Transverse colon (tissue), 4 donors: ENCODE measurements at regions of chr6 and their contacts with region 1.

Region 1: GRCh38 chr6:130076512-130076911 is 58.1 kb downstream of the L3MBTL3 start:
- DNase-seq: no peak
- H3K4me3 ChIP-seq: no peak overlapping the region
- H3K27ac ChIP-seq: no peak overlapping the region
- H3K4me1 ChIP-seq: no peaks in the 10 kb centered on the region
- H3K27me3 ChIP-seq: no peaks in the 10 kb centered on the region
- CTCF ChIP-seq: no peak
- EP300 ChIP-seq: no peak
- POLR2A ChIP-seq: no peak

Region 2: GRCh38 chr6:129672881-129673643 is 403.4 kb before region 1 on chr6:
- in situ Hi-C with region 1: no loop called
- intact Hi-C with region 1: no loop called
- DNase-seq: no peak
- H3K4me3 ChIP-seq: no peak overlapping the region
- H3K27ac ChIP-seq: peak overlapping the region; percentile 56 to 67 (median 58)
- H3K4me1 ChIP-seq: peaks cover 0 to 39% (median 4%) of the 10 kb centered on the region in 4 donors
- H3K27me3 ChIP-seq: no peaks in the 10 kb centered on the region
- CTCF ChIP-seq: no peak
- EP300 ChIP-seq: no peak
- POLR2A ChIP-seq: no peak

Region 3: DNA sequence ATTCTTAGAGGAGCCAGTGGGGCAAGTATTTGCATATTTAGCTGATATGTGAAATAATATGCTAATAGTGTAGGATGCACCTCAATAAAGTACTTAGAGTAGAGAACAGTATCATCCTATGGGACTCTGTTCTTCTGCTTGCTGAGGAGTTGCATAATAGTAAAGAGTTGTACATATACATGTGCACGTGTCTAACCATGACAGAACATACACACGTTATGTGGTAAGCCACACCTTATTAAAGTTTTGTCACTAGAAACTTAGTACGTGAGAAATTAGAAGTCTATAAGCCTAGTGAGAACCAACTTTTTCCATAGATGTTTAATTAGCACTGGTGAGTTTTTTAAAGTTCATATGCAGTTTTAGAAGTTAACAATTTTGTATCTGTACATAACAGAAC is 22.6 kb after region 1 on chr6:
- in situ Hi-C with region 1: no loop called
- intact Hi-C with region 1: loop called (anchors 1 kb)
- DNase-seq: no peak
- H3K4me3 ChIP-seq: no peak overlapping the region
- H3K27ac ChIP-seq: no peak overlapping the region
- H3K4me1 ChIP-seq: no peaks in the 10 kb centered on the region
- H3K27me3 ChIP-seq: no peaks in the 10 kb centered on the region
- CTCF ChIP-seq: no peak
- EP300 ChIP-seq: no peak
- POLR2A ChIP-seq: no peak

Region 4: DNA sequence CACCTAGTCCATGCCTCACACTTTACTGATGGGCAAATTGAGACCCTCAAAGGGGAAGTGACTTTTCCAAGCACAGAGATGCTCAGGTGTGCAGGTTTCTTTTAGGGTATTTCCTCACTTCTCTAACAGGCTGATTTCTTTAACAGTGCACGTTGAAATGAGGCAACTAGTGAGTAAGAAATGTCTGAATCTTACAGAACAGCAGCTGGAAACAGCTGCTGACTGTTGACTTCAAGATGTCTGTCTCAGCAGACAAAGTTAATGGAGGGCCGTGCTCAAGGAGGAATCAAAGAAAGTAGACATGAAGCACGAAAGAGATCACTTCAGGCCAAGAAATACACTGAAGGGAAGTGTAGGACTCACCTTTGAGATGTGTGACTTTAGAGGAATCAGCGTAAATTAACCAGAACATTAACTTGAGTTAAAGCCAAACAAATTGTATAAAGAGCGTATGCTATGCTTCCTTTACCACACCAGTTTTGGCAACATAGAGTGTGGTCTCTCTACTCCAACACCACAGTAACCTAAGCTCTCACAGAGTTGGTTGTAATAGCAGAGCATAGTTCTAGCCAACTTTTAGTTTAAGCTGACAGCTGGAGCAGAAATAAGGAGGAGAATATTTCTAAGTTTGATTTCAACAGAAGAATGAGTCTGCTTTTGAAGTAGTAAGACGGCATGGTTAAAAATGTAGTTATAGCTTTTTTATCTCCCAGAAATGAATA is 85.3 kb after region 1 on chr6:
- in situ Hi-C with region 1: no loop called
- intact Hi-C with region 1: no loop called
- DNase-seq: no peak
- H3K4me3 ChIP-seq: no peak overlapping the region
- H3K27ac ChIP-seq: peak overlapping the region in 1 of 4 donors; percentile 27
- H3K4me1 ChIP-seq: no peaks in the 10 kb centered on the region
- H3K27me3 ChIP-seq: no peaks in the 10 kb centered on the region
- CTCF ChIP-seq: no peak
- EP300 ChIP-seq: no peak
- POLR2A ChIP-seq: no peak

Region 5: DNA sequence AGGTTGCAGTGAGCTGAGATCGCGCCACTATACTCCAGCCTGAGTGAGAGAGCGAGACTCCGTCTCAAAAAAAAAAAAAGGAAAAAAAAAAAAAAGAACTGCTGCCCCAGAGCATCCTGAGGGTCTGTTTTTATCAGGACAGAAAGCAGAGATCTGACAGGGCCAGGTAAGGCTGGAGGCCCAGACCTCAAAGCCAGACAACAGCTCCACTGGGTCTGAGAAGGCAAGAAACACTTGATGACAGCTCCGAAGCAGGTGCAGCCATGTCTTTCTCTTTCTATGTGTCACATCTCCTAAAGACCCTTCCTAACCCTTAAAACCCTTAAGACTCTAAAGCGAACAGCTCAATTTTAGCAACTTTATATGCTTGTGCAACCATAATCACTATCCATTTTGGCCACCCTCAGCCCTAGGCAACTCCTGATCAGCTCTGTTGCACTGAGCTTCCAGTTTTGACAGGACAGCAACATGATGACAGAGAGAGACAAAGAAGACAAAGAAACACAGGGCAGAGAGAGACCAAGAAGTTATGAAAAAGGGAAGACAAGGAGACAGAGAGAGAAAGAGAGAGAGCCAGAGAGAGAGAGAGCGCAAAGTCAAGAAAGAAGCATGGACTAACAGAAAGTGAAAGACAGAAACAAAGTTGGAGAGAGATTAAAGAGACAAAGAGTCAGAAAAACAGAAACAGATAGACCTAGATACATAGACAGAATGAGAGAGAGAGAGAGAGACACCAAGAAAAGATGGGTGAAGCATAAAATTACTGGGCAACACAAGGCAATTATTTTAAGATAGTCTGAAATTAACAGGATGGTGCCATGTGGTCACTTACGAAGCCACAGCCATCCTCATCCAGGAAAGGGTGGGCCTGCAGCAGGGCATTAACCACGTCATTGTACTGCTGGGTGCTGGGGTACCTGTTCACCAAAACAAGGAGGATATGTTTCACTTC is 107.0 kb after region 1 on chr6:
- in situ Hi-C with region 1: no loop called
- intact Hi-C with region 1: no loop called
- DNase-seq: no peak
- H3K4me3 ChIP-seq: no peak overlapping the region
- H3K27ac ChIP-seq: no peak overlapping the region
- H3K4me1 ChIP-seq: peaks cover 0 to 5% (median under 1%) of the 10 kb centered on the region in 4 donors
- H3K27me3 ChIP-seq: no peaks in the 10 kb centered on the region
- CTCF ChIP-seq: no peak
- EP300 ChIP-seq: no peak
- POLR2A ChIP-seq: no peak

Region 6: GRCh38 chr6:130981409-130981808 is 904.9 kb after region 1 on chr6:
- in situ Hi-C with region 1: no loop called
- intact Hi-C with region 1: no loop called
- DNase-seq: no peak
- H3K4me3 ChIP-seq: no peak overlapping the region
- H3K27ac ChIP-seq: peak overlapping the region in 3 of 4 donors; percentile 21 to 43 (median 25)
- H3K4me1 ChIP-seq: peaks cover 0 to 34% (median 4%) of the 10 kb centered on the region in 4 donors
- H3K27me3 ChIP-seq: no peaks in the 10 kb centered on the region
- CTCF ChIP-seq: no peak
- EP300 ChIP-seq: no peak
- POLR2A ChIP-seq: no peak